Left cardiac atrium (tissue), 4 donors: ENCODE measurements at regions of chr22 and their contacts with region 1.

Region 1: GRCh38 chr22:41697126-41697775 is 2.1 kb upstream of the MEI1 start:
- DNase-seq: peak; percentile 95
- ATAC-seq: peak; percentile 84 to 86

Region 2: GRCh38 chr22:41800348-41801146 is 103.3 kb after region 1 on chr22 and contains the start of gene CCDC134:
- intact Hi-C with region 1: loop called in 1 of 2 experiments (anchors 10 kb)
- DNase-seq: peak; percentile 93
- ATAC-seq: peak; percentile 99
- total RNA-seq, gene CCDC134: 4.9 to 5.4 TPM

Region 3: DNA sequence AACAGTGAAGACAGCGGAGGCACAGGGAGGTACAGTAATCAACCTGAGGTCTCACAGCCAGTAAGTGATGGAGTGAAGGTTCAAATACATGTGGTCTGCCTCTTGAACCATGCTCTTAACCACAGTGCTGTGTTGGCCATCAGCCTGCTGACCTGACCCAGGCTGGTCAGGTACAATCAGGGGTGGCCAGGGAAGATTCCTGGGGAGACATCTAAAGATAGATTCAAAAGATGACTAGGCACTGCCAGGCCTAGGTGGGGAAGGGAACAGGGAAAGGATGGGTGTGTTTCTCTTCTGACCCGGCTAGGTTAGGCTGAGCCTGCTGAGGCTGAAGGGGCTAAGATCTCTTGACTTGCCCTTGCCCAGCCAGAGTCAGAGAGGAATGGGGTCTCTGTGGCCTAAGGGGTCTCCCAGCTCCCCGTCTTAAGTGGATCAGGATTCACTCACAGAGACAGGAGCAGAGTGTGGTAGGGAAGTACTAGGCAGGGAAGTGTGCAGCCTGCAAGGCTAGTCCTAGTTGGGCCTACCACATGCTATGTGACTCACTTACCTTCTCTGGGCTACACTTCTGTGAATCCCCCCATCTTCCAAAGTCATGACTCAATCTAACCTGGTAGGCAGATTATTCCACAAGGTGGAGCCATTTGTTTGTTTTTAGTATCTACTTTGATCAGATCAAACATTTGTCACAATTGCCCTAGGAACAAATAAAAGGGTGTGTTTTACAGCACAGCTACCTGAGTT is 125.2 kb after region 1 on chr22:
- intact Hi-C with region 1: loop called in 1 of 2 experiments (anchors 10 kb)
- DNase-seq: no peak
- ATAC-seq: no peak

Region 4: DNA sequence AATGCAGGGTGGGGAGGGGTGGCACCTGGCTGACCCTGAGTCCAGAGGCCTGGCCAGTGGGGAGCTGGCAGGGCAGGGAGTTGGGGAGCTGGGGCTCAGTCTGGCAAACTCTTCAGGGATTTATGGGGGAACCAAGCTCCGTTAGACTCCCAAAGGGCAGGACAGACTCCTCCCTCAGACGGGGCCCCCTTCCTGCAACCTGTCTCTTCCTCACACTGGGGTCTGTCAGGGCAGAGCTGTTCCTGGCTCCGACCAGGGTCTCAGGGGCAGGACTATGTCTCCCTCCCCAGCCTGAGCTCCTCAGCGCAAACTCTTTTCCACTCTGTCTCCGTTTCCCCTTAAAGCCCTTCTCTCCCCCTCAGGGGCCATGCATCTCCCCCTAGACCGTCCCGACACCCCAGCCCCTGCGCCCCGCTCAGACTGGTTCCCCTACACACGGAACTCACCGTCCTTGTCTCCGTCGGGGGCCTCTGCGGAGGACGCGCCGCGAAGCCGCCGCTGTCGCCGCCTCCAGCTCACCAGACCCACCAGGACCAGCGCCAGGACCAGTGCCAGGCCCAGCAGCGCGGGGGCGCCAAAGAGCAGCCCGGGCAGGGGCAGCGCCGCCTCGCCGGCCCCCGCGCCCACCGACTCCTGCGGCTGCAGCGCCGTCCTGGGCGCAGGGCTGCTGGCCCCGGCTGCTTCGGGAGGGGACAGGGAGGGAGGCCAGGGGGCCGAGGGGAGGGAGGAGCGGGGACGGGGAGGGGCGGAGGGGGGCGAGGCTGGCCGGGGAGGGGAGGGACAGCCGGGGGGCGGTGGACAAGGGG is 228.6 kb after region 1 on chr22:
- intact Hi-C with region 1: loop called in 1 of 2 experiments (anchors 10 kb)
- DNase-seq: peak; percentile 59
- ATAC-seq: peak; percentile 70 to 71

Region 5: DNA sequence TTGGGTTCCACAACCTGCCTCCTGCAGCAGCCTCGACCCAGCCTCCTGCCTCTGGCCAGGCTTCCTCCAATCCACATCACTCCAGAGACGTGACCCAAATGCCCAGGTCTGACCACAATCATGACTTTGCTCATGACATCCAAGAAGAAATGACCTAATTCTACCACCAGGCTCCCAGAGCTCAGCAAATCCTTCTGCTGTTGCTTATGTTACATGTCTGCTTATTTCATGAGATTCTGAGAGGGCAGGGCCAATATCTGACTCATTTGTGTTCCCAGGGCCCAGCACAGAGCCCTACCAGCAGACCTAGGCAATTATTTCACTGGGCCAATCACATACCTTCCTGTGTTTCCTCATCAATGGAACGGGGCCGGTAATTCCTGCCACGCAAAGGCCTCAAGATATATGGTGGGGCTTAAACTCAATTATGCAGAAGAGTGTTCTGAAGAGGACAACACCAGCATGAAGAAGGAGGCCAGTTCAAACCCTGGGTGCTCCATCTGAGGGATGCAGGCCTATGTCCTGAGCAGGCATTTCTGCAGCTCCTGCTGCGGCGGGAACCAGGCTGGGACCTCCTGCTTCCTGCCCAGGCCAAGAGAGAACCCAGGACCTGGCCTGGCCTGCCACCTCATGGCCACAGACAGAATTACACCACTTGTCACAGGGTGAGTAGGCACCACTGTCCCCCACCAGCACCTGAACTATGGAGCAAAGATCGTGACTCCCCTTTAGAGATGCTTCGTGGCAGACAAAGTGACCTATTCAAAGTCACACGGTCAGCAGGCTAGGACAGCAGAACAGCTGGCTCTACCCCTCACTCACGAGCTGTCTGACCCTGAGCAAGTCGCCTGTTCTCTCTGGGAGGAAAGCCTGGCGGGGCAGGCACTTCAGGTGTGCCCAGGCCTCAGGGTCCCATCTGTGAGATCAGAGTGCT is 243.8 kb after region 1 on chr22:
- intact Hi-C with region 1: loop called (anchors 1 to 5 kb)
- DNase-seq: peak; percentile 86
- ATAC-seq: peak; percentile 85 to 90